Gastrocnemius medialis (tissue), 4 donors: ENCODE measurements at regions of chr10 and their contacts with region 1.

Region 1: GRCh38 chr10:26860443-26861204 is at the start of gene ABI1:
- DNase-seq: peak; percentile 96 to 97
- ATAC-seq: peak; percentile 95
- H3K4me3 ChIP-seq: peak within 1 kb of the TSS; percentile 91 to 99 (median 96)
- H3K27ac ChIP-seq: peak within 1 kb of the TSS; percentile 92 to 99 (median 98)
- H3K4me1 ChIP-seq: peaks cover 29 to 39% of the 10 kb centered on the region in 2 donors
- H3K27me3 ChIP-seq: no peaks in the 10 kb centered on the region
- CTCF ChIP-seq: no peak
- POLR2A ChIP-seq: peak; percentile 94 to 97
- total RNA-seq, gene ABI1: 20.9 to 32.6 (median 28.3) TPM

Region 2: GRCh38 chr10:26665080-26666048 is 195.3 kb before region 1 on chr10:
- in situ Hi-C with region 1: no loop called
- intact Hi-C with region 1: no loop called
- DNase-seq: no peak
- ATAC-seq: no peak
- H3K4me3 ChIP-seq: no peak overlapping the region
- H3K27ac ChIP-seq: no peak overlapping the region
- H3K4me1 ChIP-seq: no peaks in the 10 kb centered on the region
- H3K27me3 ChIP-seq: no peaks in the 10 kb centered on the region
- CTCF ChIP-seq: no peak
- POLR2A ChIP-seq: no peak

Region 3: GRCh38 chr10:26697163-26697921 is 163.3 kb before region 1 on chr10 and contains the start of gene PDSS1:
- in situ Hi-C with region 1: loop called in 1 of 4 experiments (anchors 25 kb)
- intact Hi-C with region 1: loop called (anchors 5 kb)
- DNase-seq: peak; percentile 34 to 49
- ATAC-seq: peak; percentile 90 to 91
- H3K4me3 ChIP-seq: peak within 1 kb of the TSS; percentile 77 to 94 (median 92)
- H3K27ac ChIP-seq: peak within 1 kb of the TSS; percentile 80 to 92 (median 86)
- H3K4me1 ChIP-seq: peaks cover 8 to 13% of the 10 kb centered on the region in 2 donors
- H3K27me3 ChIP-seq: peaks cover 0 to 3% (median 0%) of the 10 kb centered on the region in 3 donors
- CTCF ChIP-seq: peak in 1 of 5 experiments; percentile 8
- POLR2A ChIP-seq: no peak
- total RNA-seq, gene PDSS1: 5.3 to 13.2 (median 8.2) TPM

Region 4: DNA sequence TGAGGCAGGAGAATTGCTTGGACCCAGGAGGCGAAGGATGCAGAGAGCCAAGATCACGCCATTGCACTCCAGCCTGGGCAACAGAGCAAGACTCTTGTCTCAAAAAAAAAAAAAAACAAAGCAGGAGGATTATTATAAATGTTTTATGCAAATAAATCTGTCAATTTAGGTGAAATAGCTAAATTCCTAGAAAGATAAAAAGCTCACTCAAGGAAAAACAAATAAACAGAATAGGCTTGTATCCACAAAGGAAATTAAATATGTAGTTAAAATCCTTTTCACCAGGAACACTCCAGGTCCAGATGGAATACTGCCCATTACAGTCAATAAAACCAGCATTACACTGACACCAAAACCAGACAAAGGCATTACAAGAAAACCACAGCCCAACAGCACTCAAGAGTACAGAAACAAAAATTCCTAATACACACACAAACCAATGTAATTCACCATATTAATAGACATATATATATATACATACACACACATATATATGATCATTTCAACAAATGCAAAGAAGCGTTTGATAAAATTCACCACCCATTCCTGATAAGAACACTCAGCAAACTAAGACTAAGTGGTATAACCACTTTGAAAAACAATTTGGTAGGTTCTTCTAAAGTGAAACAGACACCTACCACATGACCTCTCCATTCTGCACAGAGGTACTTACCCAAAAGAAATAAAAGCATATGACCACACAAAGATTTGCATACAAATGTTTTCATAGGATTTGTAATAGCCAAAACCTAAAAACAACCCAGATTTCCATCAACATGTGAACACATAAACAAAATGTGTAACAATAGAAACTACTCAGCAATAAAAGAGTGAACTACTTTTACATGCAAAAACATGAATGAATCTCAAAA is 38.7 kb before region 1 on chr10:
- in situ Hi-C with region 1: no loop called
- intact Hi-C with region 1: no loop called
- DNase-seq: no peak
- ATAC-seq: no peak
- H3K4me3 ChIP-seq: no peak overlapping the region
- H3K27ac ChIP-seq: no peak overlapping the region
- H3K4me1 ChIP-seq: peaks cover 4 to 14% of the 10 kb centered on the region in 2 donors
- H3K27me3 ChIP-seq: no peaks in the 10 kb centered on the region
- CTCF ChIP-seq: no peak
- POLR2A ChIP-seq: no peak

Region 5: GRCh38 chr10:26881600-26882331 is 21.1 kb after region 1 on chr10:
- in situ Hi-C with region 1: no loop called
- intact Hi-C with region 1: loop called (anchors 1 kb)
- DNase-seq: no peak
- ATAC-seq: peak; percentile 86 to 88
- H3K4me3 ChIP-seq: no peak overlapping the region
- H3K27ac ChIP-seq: no peak overlapping the region
- H3K4me1 ChIP-seq: no peaks in the 10 kb centered on the region
- H3K27me3 ChIP-seq: no peaks in the 10 kb centered on the region
- CTCF ChIP-seq: peak; percentile 52 to 85 (median 65)
- POLR2A ChIP-seq: no peak

Region 6: GRCh38 chr10:27155066-27155754 is 294.6 kb after region 1 on chr10 and contains the start of gene MASTL:
- in situ Hi-C with region 1: loop called in 1 of 4 experiments (anchors 10 kb)
- intact Hi-C with region 1: loop called (anchors 5 kb)
- DNase-seq: peak; percentile 79 to 89
- ATAC-seq: peak; percentile 85 to 87
- H3K4me3 ChIP-seq: peak within 1 kb of the TSS; percentile 65 to 99 (median 92)
- H3K27ac ChIP-seq: peak within 1 kb of the TSS; percentile 89 to 99 (median 95)
- H3K4me1 ChIP-seq: peaks cover 12 to 22% of the 10 kb centered on the region in 2 donors
- H3K27me3 ChIP-seq: no peaks in the 10 kb centered on the region
- CTCF ChIP-seq: no peak
- POLR2A ChIP-seq: peak; percentile 89 to 92
- total RNA-seq, gene MASTL: 2.0 to 3.6 (median 2.9) TPM

Region 7: GRCh38 chr10:27504007-27504807 is 643.6 kb after region 1 on chr10 and contains the start of gene RAB18:
- in situ Hi-C with region 1: no loop called
- intact Hi-C with region 1: loop called (anchors 2 kb)
- DNase-seq: peak; percentile 96 to 98
- ATAC-seq: peak; percentile 95 to 96
- H3K4me3 ChIP-seq: peak within 1 kb of the TSS; percentile 84 to 91 (median 88)
- H3K27ac ChIP-seq: peak within 1 kb of the TSS; percentile 90 to 95 (median 93)
- H3K4me1 ChIP-seq: peaks cover 22 to 30% of the 10 kb centered on the region in 2 donors
- H3K27me3 ChIP-seq: no peaks in the 10 kb centered on the region
- CTCF ChIP-seq: peak in 1 of 5 experiments; percentile 22
- POLR2A ChIP-seq: peak; percentile 91 to 92
- total RNA-seq, gene RAB18: 46.0 to 51.6 (median 47.1) TPM